ENCODE measurements at regions of chr19 and their contacts with region 1.

Region 1: GRCh38 chr19:40425450-40426287 is at the start of gene SERTAD1:
- DNase-seq: peak; percentile 100
- ATAC-seq: peak; percentile 87
- H3K4me3 Mint-ChIP-seq: peak within 1 kb of the TSS; percentile 94
- H3K27ac Mint-ChIP-seq: peak within 1 kb of the TSS; percentile 96
- H3K4me1 Mint-ChIP-seq: peaks cover 20% of the 10 kb centered on the region
- H3K27me3 Mint-ChIP-seq: no peaks in the 10 kb centered on the region
- total RNA-seq, gene SERTAD1: 9.4 to 9.6 TPM

Region 2: GRCh38 chr19:40305403-40305802 is 120.3 kb before region 1 on chr19:
- CTCF ChIA-PET with region 1: interaction called, 21 read pairs
- DNase-seq: peak; percentile 87
- ATAC-seq: peak; percentile 76
- H3K4me3 Mint-ChIP-seq: no peak overlapping the region
- H3K27ac Mint-ChIP-seq: no peak overlapping the region
- H3K4me1 Mint-ChIP-seq: peaks cover 4% of the 10 kb centered on the region
- H3K27me3 Mint-ChIP-seq: no peaks in the 10 kb centered on the region

Region 3: GRCh38 chr19:40365613-40366401 is 59.9 kb before region 1 on chr19:
- CTCF ChIA-PET with region 1: interaction called, 11 read pairs
- DNase-seq: peak; percentile 65
- ATAC-seq: peak; percentile 72
- H3K4me3 Mint-ChIP-seq: peak overlapping the region; percentile 57
- H3K27ac Mint-ChIP-seq: no peak overlapping the region
- H3K4me1 Mint-ChIP-seq: peaks cover 28% of the 10 kb centered on the region
- H3K27me3 Mint-ChIP-seq: no peaks in the 10 kb centered on the region

Region 4: DNA sequence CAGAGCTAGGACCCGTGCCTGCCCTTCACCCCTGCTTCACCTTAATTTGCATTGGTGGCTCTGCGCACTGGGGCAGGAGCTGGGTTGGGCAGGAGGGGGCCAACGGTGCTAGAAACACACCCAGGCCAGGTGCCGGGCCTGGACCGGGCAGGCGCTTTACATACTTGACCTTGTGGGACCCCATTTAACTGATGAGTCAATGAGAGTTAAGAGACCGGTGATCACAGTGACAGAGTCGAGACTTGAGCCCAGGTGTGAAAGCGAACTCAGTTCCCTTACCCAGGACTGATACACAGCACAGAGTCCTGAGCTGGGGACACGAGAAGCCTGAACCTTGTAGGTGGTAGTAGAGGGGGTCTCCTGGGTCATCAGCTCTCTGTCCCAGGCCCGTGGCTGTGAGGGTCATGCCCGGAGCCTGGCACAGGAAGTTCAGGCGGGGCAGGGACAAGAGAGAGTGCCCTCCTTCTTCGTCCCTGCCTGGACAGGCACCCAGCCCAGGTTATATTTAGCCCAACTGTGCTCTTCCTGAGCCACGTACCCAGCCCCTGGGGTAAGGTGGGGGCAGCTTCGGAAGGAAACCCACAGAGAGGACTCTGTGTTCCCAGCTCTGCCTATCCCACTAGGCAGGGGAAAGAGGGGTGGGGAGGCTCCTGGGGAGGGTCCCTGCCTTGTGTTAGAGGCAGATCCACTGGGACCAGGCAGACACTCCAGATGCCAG is 14.4 kb before region 1 on chr19:
- CTCF ChIA-PET with region 1: interaction called, 22 read pairs
- DNase-seq: no peak
- ATAC-seq: no peak
- H3K4me3 Mint-ChIP-seq: no peak overlapping the region
- H3K27ac Mint-ChIP-seq: no peak overlapping the region
- H3K4me1 Mint-ChIP-seq: peaks cover 9% of the 10 kb centered on the region
- H3K27me3 Mint-ChIP-seq: peaks cover 2% of the 10 kb centered on the region

Region 5: DNA sequence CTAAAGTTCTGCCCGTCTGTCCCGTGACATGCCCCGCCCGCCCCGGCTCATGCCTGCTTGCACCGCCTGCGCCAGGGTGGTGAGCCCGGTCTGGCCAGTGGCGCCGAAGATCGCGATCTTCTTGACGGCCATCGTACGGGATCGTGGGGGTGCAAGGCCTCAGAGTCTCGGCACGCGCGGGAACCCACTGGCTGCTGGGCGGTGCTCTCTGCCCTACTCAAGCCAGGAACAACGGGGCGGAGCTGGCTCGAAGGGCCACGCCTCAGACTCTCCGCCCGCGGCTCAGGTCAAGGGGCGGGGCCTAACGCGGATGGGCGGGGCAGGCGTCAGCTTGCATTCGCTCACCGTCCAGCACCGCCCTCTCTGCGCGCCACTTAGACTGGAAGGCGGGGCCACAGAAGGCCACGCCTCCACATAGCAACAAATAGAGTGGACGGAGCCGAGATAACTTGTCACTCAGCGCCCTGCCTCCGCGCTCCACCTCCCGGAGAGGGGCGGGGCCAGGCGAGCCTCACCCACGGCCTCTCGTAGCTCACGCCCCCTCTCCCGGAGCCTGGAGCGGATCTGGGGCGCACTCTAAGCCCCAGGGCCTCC is 40.0 kb after region 1 on chr19 and contains the start of gene BLVRB:
- CTCF ChIA-PET with region 1: interaction called, 57 read pairs
- DNase-seq: peak; percentile 99
- ATAC-seq: peak; percentile 88
- H3K4me3 Mint-ChIP-seq: peak within 1 kb of the TSS; percentile 79
- H3K27ac Mint-ChIP-seq: peak within 1 kb of the TSS; percentile 85
- H3K4me1 Mint-ChIP-seq: peaks cover 34% of the 10 kb centered on the region
- H3K27me3 Mint-ChIP-seq: peaks cover 23% of the 10 kb centered on the region
- total RNA-seq, gene BLVRB: 12.9 to 23.3 TPM

Region 6: DNA sequence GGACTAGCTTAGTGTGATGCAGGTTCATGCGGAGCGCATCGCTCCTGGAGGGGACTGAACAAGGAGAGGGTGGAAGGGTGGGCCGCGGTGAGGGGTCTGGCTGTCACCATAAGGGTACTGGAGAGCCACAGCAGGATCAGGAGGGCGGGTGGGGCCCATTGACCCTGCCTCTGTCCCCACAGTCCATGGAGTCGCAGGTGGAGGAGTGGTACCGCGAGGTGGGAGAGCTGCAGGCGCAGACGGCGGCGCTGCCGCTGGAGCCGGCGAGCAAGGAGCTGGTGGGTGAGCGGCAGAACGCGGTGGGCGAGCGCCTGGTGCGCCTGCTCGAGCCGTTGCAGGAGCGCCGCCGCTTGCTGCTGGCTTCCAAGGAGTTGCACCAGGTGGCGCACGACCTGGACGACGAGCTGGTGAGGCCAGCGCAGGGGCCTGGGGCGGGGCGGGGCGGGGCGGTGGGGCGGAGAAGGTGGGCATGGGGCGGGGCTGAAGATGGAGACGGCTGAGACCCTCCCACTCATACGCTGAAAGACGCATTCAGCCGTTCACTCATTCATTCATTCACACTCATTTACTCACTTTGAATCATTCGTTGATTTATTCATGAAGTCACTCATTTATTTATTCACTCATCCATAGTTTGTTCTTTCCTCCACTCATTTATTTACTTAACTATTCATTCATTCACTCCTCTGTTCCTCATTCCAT is 123.5 kb after region 1 on chr19:
- CTCF ChIA-PET with region 1: no interaction called
- DNase-seq: peak; percentile 78
- ATAC-seq: peak; percentile 93
- H3K4me3 Mint-ChIP-seq: no peak overlapping the region
- H3K27ac Mint-ChIP-seq: no peak overlapping the region
- H3K4me1 Mint-ChIP-seq: peaks cover 8% of the 10 kb centered on the region
- H3K27me3 Mint-ChIP-seq: peaks cover 52% of the 10 kb centered on the region